Activated CD4-positive, alpha-beta memory T cell treated with anti-CD3 and anti-CD28 coated beads, Interleukin-2, amount 10 ng/mL, durations not matched to agents 7 days and 5 days (primary cell): ENCODE measurements at regions of chr12 and their contacts with region 1.

Region 1: GRCh38 chr12:121351820-121352681 is at the start of gene ANAPC5:
- DNase-seq: peak; percentile 93
- H3K4me3 Mint-ChIP-seq: peak within 1 kb of the TSS; percentile 91
- H3K27ac Mint-ChIP-seq: peak within 1 kb of the TSS; percentile 91
- H3K4me1 Mint-ChIP-seq: peaks cover 36% of the 10 kb centered on the region
- H3K27me3 Mint-ChIP-seq: peaks cover 5% of the 10 kb centered on the region
- total RNA-seq, gene ANAPC5: 125 to 131 TPM

Region 2: DNA sequence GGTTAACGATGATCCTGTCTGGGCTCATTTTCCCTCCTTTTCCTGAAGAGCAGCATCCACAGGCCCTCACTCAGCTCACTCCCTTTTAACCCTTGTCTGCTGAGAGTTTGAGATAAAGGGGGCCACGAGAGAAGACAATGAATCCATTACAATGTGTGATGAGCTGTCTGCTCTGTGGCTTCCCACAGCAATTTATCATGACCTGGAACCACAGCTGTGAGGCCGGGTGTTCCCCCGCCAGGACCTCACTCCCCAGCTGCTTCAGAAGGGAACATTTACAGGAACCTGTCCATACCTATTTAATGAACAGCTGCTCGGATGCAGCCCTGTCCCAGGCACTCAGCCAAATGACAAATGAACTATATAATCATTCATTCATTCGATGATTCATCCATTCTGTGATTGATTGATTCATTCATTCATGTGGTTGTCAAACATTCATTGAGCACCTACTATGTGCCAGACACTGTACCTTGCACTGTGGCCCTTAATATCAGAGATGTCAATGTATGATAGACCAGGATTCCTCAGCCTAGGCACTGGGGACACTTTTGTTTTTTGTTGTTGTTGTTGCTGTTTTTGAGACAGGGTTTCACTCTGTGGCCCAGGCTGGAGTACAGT is 237.9 kb before region 1 on chr12:
- CTCF ChIA-PET with region 1: no interaction called
- POLR2A ChIA-PET with region 1: no interaction called
- DNase-seq: no peak
- H3K4me3 Mint-ChIP-seq: no peak overlapping the region
- H3K27ac Mint-ChIP-seq: no peak overlapping the region
- H3K4me1 Mint-ChIP-seq: peaks cover 8% of the 10 kb centered on the region
- H3K27me3 Mint-ChIP-seq: peaks cover 3% of the 10 kb centered on the region

Region 3: DNA sequence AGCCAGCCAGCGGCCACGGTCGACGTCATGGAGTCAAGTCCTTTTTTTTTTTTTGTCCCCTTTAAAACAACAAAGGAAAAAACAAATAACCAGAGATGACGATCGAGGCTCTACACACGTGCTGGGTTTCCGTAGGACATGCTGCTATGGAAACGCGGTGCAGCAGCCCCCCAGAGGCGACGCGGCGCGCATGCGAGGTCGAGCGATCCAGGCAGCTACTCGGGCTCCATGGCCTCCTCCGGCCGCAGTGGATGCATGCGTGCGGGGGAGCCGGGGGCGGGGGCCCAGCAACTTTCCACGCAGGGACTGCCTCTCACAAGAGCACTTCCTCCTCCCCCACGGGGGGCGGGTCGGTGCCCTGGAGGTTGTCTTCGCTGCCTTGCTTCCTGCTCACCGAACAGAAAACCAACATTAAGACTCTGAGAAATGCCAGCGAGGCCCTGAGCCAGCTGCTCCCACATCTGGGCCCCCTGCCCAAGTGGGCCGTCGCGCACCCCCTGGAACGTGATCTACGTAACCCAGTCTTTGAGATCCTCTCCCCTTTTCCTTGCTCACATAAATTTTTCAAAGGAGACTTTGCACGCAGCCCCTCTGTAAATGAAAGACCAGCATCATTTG is 111.5 kb before region 1 on chr12:
- CTCF ChIA-PET with region 1: no interaction called
- POLR2A ChIA-PET with region 1: interaction called, 10 read pairs
- DNase-seq: peak; percentile 83
- H3K4me3 Mint-ChIP-seq: peak overlapping the region; percentile 43
- H3K27ac Mint-ChIP-seq: peak overlapping the region; percentile 78
- H3K4me1 Mint-ChIP-seq: peaks cover 43% of the 10 kb centered on the region
- H3K27me3 Mint-ChIP-seq: no peaks in the 10 kb centered on the region

Region 4: DNA sequence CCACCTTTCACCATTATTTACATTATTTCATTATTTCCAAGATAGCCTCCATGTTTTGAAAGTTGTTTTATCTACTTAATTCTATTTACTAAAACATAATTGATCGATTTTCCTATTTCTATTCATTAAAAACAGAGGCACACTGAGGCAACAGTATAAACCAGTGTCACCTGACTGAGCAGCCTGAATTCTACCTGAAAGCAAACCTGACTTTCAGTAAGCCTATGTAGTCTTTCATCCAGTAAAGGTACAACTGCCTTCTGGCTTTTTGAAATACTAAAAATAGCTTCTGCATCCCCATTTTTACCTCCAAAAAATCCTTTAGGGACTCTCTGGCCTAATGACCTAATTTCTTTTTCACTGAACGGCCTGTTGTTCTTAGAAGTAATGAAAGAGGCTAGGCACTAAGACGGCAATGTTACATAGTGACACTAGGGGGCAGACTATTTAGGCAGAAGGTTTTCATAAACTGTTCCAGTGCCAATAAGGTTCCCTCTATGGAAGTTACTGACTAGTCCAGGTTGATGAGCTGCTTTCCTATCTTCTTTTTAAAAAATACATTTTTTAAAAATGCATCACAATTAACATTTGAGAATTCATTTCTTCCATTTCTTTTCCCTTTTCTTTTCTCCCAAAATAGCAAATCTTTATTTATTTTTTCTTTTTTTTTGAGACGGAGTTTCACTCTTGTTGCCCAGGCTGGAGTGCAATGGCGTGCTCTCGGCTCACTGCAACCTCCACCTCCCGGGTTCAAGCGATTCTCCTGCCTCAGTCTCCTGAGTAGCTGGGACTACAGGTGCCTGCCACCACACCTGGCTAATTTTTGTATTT is 17.3 kb before region 1 on chr12:
- CTCF ChIA-PET with region 1: interaction called, 17 read pairs
- POLR2A ChIA-PET with region 1: interaction called, 17 read pairs
- DNase-seq: no peak
- H3K4me3 Mint-ChIP-seq: no peak overlapping the region
- H3K27ac Mint-ChIP-seq: peak overlapping the region; percentile 49
- H3K4me1 Mint-ChIP-seq: peaks cover 6% of the 10 kb centered on the region
- H3K27me3 Mint-ChIP-seq: no peaks in the 10 kb centered on the region

Region 5: DNA sequence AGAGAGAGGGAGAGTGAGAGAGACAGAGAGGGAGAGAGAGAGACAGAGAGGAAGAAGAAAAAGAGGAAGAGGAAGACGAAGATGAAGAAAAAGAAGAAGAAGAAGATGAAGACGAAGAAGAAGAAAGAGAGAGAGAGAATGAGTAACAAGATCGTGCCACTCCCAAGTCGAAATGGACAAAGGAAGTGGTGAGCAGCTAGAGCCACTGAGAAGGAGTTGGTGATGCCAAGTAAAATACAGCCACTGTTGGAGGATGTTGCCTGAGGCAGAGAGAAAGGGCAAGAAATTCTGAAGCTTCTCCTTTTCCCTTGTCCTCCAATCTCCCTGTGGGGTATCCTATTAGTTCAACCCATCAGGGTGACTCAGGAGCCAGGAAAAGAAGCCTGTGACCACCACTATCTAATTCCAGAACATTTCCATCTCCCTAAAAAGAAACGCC is 12.7 kb after region 1 on chr12:
- CTCF ChIA-PET with region 1: interaction called, 3 read pairs
- POLR2A ChIA-PET with region 1: interaction called, 13 read pairs
- DNase-seq: no peak
- H3K4me3 Mint-ChIP-seq: no peak overlapping the region
- H3K27ac Mint-ChIP-seq: no peak overlapping the region
- H3K4me1 Mint-ChIP-seq: peaks cover 7% of the 10 kb centered on the region
- H3K27me3 Mint-ChIP-seq: peaks cover 26% of the 10 kb centered on the region

Region 6: GRCh38 chr12:121391619-121392324 is 39.7 kb after region 1 on chr12:
- CTCF ChIA-PET with region 1: interaction called, 4 read pairs
- POLR2A ChIA-PET with region 1: interaction called, 12 read pairs
- DNase-seq: peak; percentile 58
- H3K4me3 Mint-ChIP-seq: peak overlapping the region; percentile 48
- H3K27ac Mint-ChIP-seq: peak overlapping the region; percentile 74
- H3K4me1 Mint-ChIP-seq: peaks cover 18% of the 10 kb centered on the region
- H3K27me3 Mint-ChIP-seq: no peaks in the 10 kb centered on the region